ENCODE measurements at regions of chr5 and their contacts with region 1.

Region 1: DNA sequence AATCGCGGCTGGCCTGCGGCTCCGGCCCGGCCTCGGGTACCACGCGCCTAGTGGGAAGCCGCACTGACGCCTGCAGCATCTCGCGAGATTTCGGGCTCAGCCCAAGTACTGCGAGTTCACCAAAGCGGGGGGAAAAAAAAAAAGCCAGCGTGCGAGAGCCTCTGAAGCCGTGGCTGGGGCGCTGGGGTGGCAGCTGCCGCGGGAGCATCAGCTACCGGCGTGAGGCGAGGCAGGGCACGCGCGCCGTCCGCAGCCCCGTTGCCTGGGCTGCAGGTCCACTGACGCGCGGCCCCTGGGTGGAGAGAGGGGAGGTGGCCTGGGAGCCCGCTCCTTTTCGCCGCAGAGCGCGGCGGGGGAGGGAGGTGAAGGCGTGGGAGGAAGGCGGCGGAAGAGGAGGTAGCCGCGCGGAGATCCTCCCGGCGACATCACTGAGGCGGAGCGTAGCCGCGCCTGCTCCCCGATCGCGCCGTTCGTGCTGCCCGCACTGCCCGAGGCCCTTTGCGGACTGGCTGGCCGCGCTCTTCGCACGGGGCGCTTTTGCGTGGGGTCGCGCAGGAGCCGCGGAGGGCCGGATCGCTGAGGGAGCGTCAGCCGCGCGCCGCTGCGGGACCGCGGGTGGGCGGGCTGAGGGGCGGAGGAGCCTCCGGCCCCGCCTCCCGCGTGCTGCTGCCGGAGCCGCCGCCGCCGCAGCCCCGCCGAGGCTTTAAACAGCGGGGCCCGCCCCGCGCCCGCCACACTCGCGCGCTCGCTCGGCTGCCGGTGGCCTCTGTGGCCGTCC is at the start of gene SLC12A2:
- DNase-seq: peak; percentile 92
- ATAC-seq: peak; percentile 75
- H3K4me3 Mint-ChIP-seq: peak within 1 kb of the TSS; percentile 95
- H3K27ac Mint-ChIP-seq: peak within 1 kb of the TSS; percentile 97
- H3K4me1 Mint-ChIP-seq: peaks cover 72% of the 10 kb centered on the region
- H3K27me3 Mint-ChIP-seq: no peaks in the 10 kb centered on the region
- CTCF ChIP-seq: no peak
- total RNA-seq, gene SLC12A2: 19.9 and 20.6 TPM in 2 replicates

Region 2: GRCh38 chr5:127517480-127518318 is 565.5 kb before region 1 on chr5 and contains the start of gene PRRC1:
- CTCF ChIA-PET with region 1: no interaction called
- POLR2A ChIA-PET with region 1: no interaction called
- intact Hi-C with region 1: loop called (anchors 1 kb)
- DNase-seq: peak; percentile 66
- ATAC-seq: peak; percentile 97
- H3K4me3 Mint-ChIP-seq: peak within 1 kb of the TSS; percentile 88
- H3K27ac Mint-ChIP-seq: peak within 1 kb of the TSS; percentile 68
- H3K4me1 Mint-ChIP-seq: peaks cover 27% of the 10 kb centered on the region
- H3K27me3 Mint-ChIP-seq: peaks cover 3% of the 10 kb centered on the region
- CTCF ChIP-seq: no peak
- total RNA-seq, gene PRRC1: 33.6 and 34.7 TPM in 2 replicates

Region 3: GRCh38 chr5:127564002-127564769 is 519.0 kb before region 1 on chr5:
- CTCF ChIA-PET with region 1: no interaction called
- POLR2A ChIA-PET with region 1: interaction called, 3 read pairs
- intact Hi-C with region 1: loop called (anchors 5 kb)
- DNase-seq: no peak
- ATAC-seq: peak; percentile 64
- H3K4me3 Mint-ChIP-seq: no peak overlapping the region
- H3K27ac Mint-ChIP-seq: no peak overlapping the region
- H3K4me1 Mint-ChIP-seq: peaks cover 3% of the 10 kb centered on the region
- H3K27me3 Mint-ChIP-seq: peaks cover 11% of the 10 kb centered on the region
- CTCF ChIP-seq: peak; percentile 38

Region 4: GRCh38 chr5:127875235-127876021 is 207.8 kb before region 1 on chr5:
- CTCF ChIA-PET with region 1: no interaction called
- POLR2A ChIA-PET with region 1: no interaction called
- intact Hi-C with region 1: loop called (anchors 5 kb)
- DNase-seq: no peak
- ATAC-seq: peak; percentile 42
- H3K4me3 Mint-ChIP-seq: no peak overlapping the region
- H3K27ac Mint-ChIP-seq: no peak overlapping the region
- H3K4me1 Mint-ChIP-seq: no peaks in the 10 kb centered on the region
- H3K27me3 Mint-ChIP-seq: peaks cover 2% of the 10 kb centered on the region
- CTCF ChIP-seq: no peak

Region 5: GRCh38 chr5:127909078-127909477 is 174.1 kb before region 1 on chr5:
- CTCF ChIA-PET with region 1: no interaction called
- POLR2A ChIA-PET with region 1: no interaction called
- intact Hi-C with region 1: loop called (anchors 2 kb)
- DNase-seq: no peak
- ATAC-seq: no peak
- H3K4me3 Mint-ChIP-seq: no peak overlapping the region
- H3K27ac Mint-ChIP-seq: no peak overlapping the region
- H3K4me1 Mint-ChIP-seq: no peaks in the 10 kb centered on the region
- H3K27me3 Mint-ChIP-seq: no peaks in the 10 kb centered on the region
- CTCF ChIP-seq: no peak

Region 6: GRCh38 chr5:128060644-128061385 is 22.4 kb before region 1 on chr5:
- CTCF ChIA-PET with region 1: no interaction called
- POLR2A ChIA-PET with region 1: no interaction called
- intact Hi-C with region 1: no loop called
- DNase-seq: no peak
- ATAC-seq: no peak
- H3K4me3 Mint-ChIP-seq: no peak overlapping the region
- H3K27ac Mint-ChIP-seq: no peak overlapping the region
- H3K4me1 Mint-ChIP-seq: no peaks in the 10 kb centered on the region
- H3K27me3 Mint-ChIP-seq: no peaks in the 10 kb centered on the region
- CTCF ChIP-seq: no peak

Region 7: GRCh38 chr5:129094087-129094923 is 1011.1 kb after region 1 on chr5 and contains the start of gene ISOC1:
- CTCF ChIA-PET with region 1: no interaction called
- POLR2A ChIA-PET with region 1: interaction called, 3 read pairs
- intact Hi-C with region 1: loop called (anchors 1 kb)
- DNase-seq: peak; percentile 89
- ATAC-seq: peak; percentile 94
- H3K4me3 Mint-ChIP-seq: peak within 1 kb of the TSS; percentile 90
- H3K27ac Mint-ChIP-seq: peak within 1 kb of the TSS; percentile 79
- H3K4me1 Mint-ChIP-seq: peaks cover 15% of the 10 kb centered on the region
- H3K27me3 Mint-ChIP-seq: peaks cover 13% of the 10 kb centered on the region
- CTCF ChIP-seq: no peak
- total RNA-seq, gene ISOC1: 9.9 and 10.7 TPM in 2 replicates